ENCODE measurements at regions of chr6 and their contacts with region 1.

Region 1: GRCh38 chr6:87407901-87408720 is at the start of gene CFAP206:
- DNase-seq: peak; percentile 75 to 87 (median 81)
- ATAC-seq: peak; percentile 91
- H3K4me3 ChIP-seq: peak within 1 kb of the TSS; percentile 98
- H3K4me3 Mint-ChIP-seq: peak within 1 kb of the TSS; percentile 76 to 94 (median 88)
- H3K27ac ChIP-seq: peak within 1 kb of the TSS; percentile 75
- H3K27ac Mint-ChIP-seq: peak within 1 kb of the TSS in 8 of 9 donors; percentile 21 to 91 (median 70)
- H3K4me1 ChIP-seq: peaks cover 0 to 5% of the 10 kb centered on the region in 2 donors
- H3K4me1 Mint-ChIP-seq: peaks cover 0 to 7% (median 5%) of the 10 kb centered on the region in 7 donors
- H3K27me3 ChIP-seq: no peaks in the 10 kb centered on the region
- H3K27me3 Mint-ChIP-seq: peaks cover 18 to 47% (median 23%) of the 10 kb centered on the region in 5 donors
- total RNA-seq, gene CFAP206: not detected

Region 2: DNA sequence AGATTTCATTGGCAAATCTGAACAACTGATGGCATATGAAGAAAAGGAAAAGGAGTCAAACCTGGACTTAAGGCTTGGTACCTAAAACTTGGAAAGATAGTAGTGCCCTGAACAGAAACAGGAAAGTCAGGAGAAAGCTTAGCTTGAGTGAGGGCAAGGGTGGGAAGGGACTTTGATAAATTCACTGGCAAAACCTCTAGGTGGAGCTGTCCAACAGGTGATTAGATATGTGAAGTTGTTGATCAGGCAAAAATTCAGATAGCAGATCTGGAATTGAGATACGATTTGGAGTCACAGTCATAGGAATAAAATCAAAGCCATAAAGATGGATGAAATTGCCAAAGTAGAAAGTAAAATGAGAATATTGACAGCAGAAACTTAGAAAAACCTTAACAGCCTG is 268.9 kb before region 1 on chr6:
- CTCF ChIA-PET with region 1: no interaction called
- POLR2A ChIA-PET with region 1: interaction called, 3 read pairs
- intact Hi-C with region 1: loop called in 1 of 2 experiments (anchors 5 kb)
- DNase-seq: peak in 7 of 9 donors; percentile 42 to 72 (median 65)
- ATAC-seq: peak; percentile 82
- H3K4me3 ChIP-seq: no peak overlapping the region
- H3K4me3 Mint-ChIP-seq: peak overlapping the region in 1 of 10 donors; percentile 12
- H3K27ac ChIP-seq: no peak overlapping the region
- H3K27ac Mint-ChIP-seq: no peak overlapping the region
- H3K4me1 ChIP-seq: no peaks in the 10 kb centered on the region
- H3K4me1 Mint-ChIP-seq: peaks cover 0 to 6% (median 4%) of the 10 kb centered on the region in 7 donors
- H3K27me3 ChIP-seq: no peaks in the 10 kb centered on the region
- H3K27me3 Mint-ChIP-seq: peaks cover 0 to 59% (median 18%) of the 10 kb centered on the region in 5 donors

Region 3: GRCh38 chr6:87393022-87393622 is 15.0 kb before region 1 on chr6:
- CTCF ChIA-PET with region 1: interaction called, 4 read pairs
- POLR2A ChIA-PET with region 1: no interaction called
- intact Hi-C with region 1: loop called (anchors 1 kb)
- DNase-seq: peak in 7 of 9 donors; percentile 43 to 63 (median 62)
- ATAC-seq: peak; percentile 96
- H3K4me3 ChIP-seq: no peak overlapping the region
- H3K4me3 Mint-ChIP-seq: no peak overlapping the region
- H3K27ac ChIP-seq: no peak overlapping the region
- H3K27ac Mint-ChIP-seq: no peak overlapping the region
- H3K4me1 ChIP-seq: no peaks in the 10 kb centered on the region
- H3K4me1 Mint-ChIP-seq: peaks cover 0 to 3% (median 0%) of the 10 kb centered on the region in 7 donors
- H3K27me3 ChIP-seq: no peaks in the 10 kb centered on the region
- H3K27me3 Mint-ChIP-seq: no peaks in the 10 kb centered on the region

Region 4: GRCh38 chr6:87472525-87473418 is 64.7 kb after region 1 on chr6 and contains the start of gene SLC35A1:
- CTCF ChIA-PET with region 1: no interaction called
- POLR2A ChIA-PET with region 1: interaction called, 6 read pairs
- intact Hi-C with region 1: loop called (anchors 1 kb)
- DNase-seq: peak; percentile 78 to 92 (median 87)
- ATAC-seq: peak; percentile 97
- H3K4me3 ChIP-seq: peak within 1 kb of the TSS; percentile 81
- H3K4me3 Mint-ChIP-seq: peak within 1 kb of the TSS; percentile 88 to 99 (median 98)
- H3K27ac ChIP-seq: peak within 1 kb of the TSS; percentile 93
- H3K27ac Mint-ChIP-seq: peak within 1 kb of the TSS; percentile 95 to 100 (median 99)
- H3K4me1 ChIP-seq: peaks cover 9 to 11% of the 10 kb centered on the region in 2 donors
- H3K4me1 Mint-ChIP-seq: peaks cover 14 to 31% (median 20%) of the 10 kb centered on the region in 7 donors
- H3K27me3 ChIP-seq: no peaks in the 10 kb centered on the region
- H3K27me3 Mint-ChIP-seq: peaks cover 2 to 14% (median 9%) of the 10 kb centered on the region in 5 donors
- total RNA-seq, gene SLC35A1: 10.4 to 23.4 (median 15.6) TPM

Region 5: GRCh38 chr6:88870717-88871330 is 1462.7 kb after region 1 on chr6:
- CTCF ChIA-PET with region 1: no interaction called
- POLR2A ChIA-PET with region 1: no interaction called
- intact Hi-C with region 1: loop called in 1 of 2 experiments (anchors 5 kb)
- DNase-seq: peak in 7 of 9 donors; percentile 12 to 54 (median 47)
- ATAC-seq: peak; percentile 60
- H3K4me3 ChIP-seq: no peak overlapping the region
- H3K4me3 Mint-ChIP-seq: no peak overlapping the region
- H3K27ac ChIP-seq: no peak overlapping the region
- H3K27ac Mint-ChIP-seq: no peak overlapping the region
- H3K4me1 ChIP-seq: no peaks in the 10 kb centered on the region
- H3K4me1 Mint-ChIP-seq: peaks cover 15 to 46% (median 29%) of the 10 kb centered on the region in 7 donors
- H3K27me3 ChIP-seq: no peaks in the 10 kb centered on the region
- H3K27me3 Mint-ChIP-seq: no peaks in the 10 kb centered on the region

Region 6: DNA sequence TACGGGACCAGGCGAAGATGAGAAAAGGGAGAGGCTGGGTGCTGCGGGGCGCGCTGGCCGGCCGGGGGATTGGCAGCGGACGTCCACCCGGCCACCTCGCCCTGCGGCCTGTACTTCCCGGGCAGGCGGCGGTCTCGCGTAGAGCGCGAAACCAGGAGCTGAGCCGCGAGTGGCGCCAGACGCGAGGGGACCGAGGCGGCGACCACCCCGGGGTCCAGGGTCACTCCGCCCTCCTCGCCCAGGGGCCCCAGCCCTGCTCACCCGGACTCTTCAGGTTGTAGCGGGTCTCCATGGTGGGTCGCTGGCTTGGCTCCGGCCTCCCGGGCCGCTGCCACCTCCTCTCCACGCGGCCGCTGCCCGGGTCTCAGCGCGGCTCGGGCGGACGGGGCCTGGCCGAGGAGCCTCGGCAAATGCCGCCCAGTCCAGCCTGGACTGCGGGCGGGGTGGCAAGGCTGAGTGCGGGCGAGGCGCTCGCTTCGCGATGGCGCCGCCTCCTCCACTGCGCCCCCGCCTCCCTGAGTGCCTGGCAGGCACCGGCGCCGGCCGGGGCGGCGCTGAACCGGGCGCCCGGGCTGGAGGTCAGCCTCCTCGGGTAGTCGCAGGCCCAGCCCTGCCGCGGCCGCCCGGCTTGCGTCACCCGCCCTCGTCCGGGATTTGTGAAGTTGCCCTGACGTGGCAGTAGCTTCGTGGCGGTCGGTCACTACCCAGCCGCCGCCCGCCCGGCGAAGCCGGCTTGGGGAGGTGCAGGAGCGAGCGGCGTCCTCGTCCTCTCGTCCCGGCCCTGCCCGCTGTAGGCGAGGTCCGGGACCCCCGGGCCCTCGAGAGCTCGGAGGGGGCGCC is 1944.4 kb after region 1 on chr6 and contains the start of gene UBE2J1:
- CTCF ChIA-PET with region 1: no interaction called
- POLR2A ChIA-PET with region 1: no interaction called
- intact Hi-C with region 1: loop called in 1 of 2 experiments (anchors 10 kb)
- DNase-seq: peak; percentile 34 to 87 (median 61)
- ATAC-seq: peak; percentile 89
- H3K4me3 ChIP-seq: peak within 1 kb of the TSS; percentile 67
- H3K4me3 Mint-ChIP-seq: peak within 1 kb of the TSS; percentile 96 to 100 (median 98)
- H3K27ac ChIP-seq: peak within 1 kb of the TSS; percentile 88
- H3K27ac Mint-ChIP-seq: peak within 1 kb of the TSS; percentile 95 to 98 (median 97)
- H3K4me1 ChIP-seq: peaks cover 27 to 30% of the 10 kb centered on the region in 2 donors
- H3K4me1 Mint-ChIP-seq: peaks cover 44 to 81% (median 72%) of the 10 kb centered on the region in 7 donors
- H3K27me3 ChIP-seq: no peaks in the 10 kb centered on the region
- H3K27me3 Mint-ChIP-seq: no peaks in the 10 kb centered on the region
- total RNA-seq, gene UBE2J1: 18.8 to 47.7 (median 27.7) TPM